ENCODE measurements at regions of chr1 and their contacts with region 1.

Region 1: DNA sequence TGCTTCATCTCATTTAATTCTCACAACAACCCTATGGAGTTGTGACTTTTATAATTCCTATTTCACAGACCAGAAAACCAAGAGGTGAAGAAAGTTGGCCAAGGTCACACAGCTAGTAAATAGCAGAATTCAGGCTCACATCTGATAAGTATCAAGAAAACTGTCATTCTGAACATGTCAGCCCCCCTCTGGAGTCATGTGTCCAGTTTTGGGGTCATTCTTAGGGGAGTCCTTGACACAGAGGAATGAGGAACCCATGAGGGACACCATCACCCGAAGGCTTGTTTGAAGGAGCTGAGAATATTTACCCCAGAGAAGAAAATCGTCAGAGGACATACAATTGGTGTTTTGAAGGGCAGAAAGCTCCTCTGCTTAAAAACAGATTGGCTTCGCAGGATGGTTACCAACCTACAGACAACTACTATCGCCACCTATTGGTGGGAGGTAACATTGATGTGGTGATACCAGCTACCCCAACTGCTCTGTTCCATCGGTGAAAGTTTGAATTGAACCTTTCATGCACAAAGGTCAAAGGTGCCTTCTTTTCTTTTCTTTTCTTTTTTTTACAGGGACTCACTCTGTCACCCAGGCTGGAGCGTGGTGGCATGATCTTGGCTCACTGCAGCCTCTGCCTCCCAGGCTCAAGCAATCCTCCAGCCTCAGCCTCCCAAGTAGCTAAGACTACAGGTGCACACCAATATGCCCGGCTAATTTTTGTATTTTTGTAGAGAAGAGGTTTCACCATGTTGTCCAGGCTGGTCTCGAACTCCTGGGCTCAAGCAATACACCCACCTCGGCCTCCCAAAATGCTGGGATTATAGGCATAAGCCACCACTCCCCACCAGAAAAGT is 31.3 kb downstream of the NCMAP start:
- DNase-seq: peak; percentile 71
- H3K4me3 Mint-ChIP-seq: peak overlapping the region; percentile 24
- H3K27ac Mint-ChIP-seq: peak overlapping the region; percentile 72
- H3K4me1 Mint-ChIP-seq: peaks cover 5% of the 10 kb centered on the region
- H3K27me3 Mint-ChIP-seq: no peaks in the 10 kb centered on the region

Region 2: GRCh38 chr1:24502709-24503058 is 84.5 kb before region 1 on chr1 and contains the start of gene RCAN3:
- CTCF ChIA-PET with region 1: interaction called, 11 read pairs
- intact Hi-C with region 1: no loop called
- DNase-seq: peak; percentile 87
- H3K4me3 Mint-ChIP-seq: peak within 1 kb of the TSS; percentile 100
- H3K27ac Mint-ChIP-seq: peak within 1 kb of the TSS; percentile 93
- H3K4me1 Mint-ChIP-seq: peaks cover 49% of the 10 kb centered on the region
- H3K27me3 Mint-ChIP-seq: no peaks in the 10 kb centered on the region
- total RNA-seq, gene RCAN3: 70.8 to 71.9 TPM

Region 3: DNA sequence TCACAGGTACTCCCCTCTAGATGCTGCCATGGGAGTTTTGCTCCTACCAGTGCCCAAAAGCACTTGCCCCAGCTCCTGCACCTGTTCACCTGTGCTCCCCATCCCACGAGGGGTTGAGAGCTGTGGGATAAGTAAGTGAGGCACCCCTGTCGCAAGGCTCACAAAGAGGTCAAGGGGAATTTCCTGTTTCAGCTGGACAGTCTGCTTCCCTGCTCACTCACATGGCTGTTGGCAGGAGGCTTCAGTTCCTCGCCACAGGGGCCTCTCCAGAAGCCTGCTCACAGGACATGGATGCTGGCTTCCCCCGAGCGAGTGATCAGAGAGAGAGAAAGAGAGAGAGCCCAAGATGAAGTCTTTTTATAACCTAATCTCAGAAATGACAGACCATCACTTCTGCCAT is 40.0 kb before region 1 on chr1:
- CTCF ChIA-PET with region 1: interaction called, 22 read pairs
- intact Hi-C with region 1: no loop called
- DNase-seq: no peak
- H3K4me3 Mint-ChIP-seq: no peak overlapping the region
- H3K27ac Mint-ChIP-seq: no peak overlapping the region
- H3K4me1 Mint-ChIP-seq: peaks cover 25% of the 10 kb centered on the region
- H3K27me3 Mint-ChIP-seq: no peaks in the 10 kb centered on the region

Region 4: GRCh38 chr1:24601023-24601527 is 13.9 kb after region 1 on chr1:
- CTCF ChIA-PET with region 1: interaction called, 11 read pairs
- intact Hi-C with region 1: no loop called
- DNase-seq: no peak
- H3K4me3 Mint-ChIP-seq: no peak overlapping the region
- H3K27ac Mint-ChIP-seq: no peak overlapping the region
- H3K4me1 Mint-ChIP-seq: no peaks in the 10 kb centered on the region
- H3K27me3 Mint-ChIP-seq: no peaks in the 10 kb centered on the region